Activated CD4-positive, alpha-beta T cell treated with anti-CD3 and anti-CD28 coated beads for 36 hours (primary cell): ENCODE measurements at regions of chr22 and their contacts with region 1.

Region 1: GRCh38 chr22:37300551-37301017 is 18.3 kb downstream of the CYTH4 start:
- DNase-seq: peak; percentile 63
- ATAC-seq: peak; percentile 31
- H3K4me3 Mint-ChIP-seq: peak overlapping the region; percentile 58
- H3K27ac Mint-ChIP-seq: peak overlapping the region; percentile 89
- H3K4me1 Mint-ChIP-seq: peaks cover 62% of the 10 kb centered on the region
- H3K27me3 Mint-ChIP-seq: no peaks in the 10 kb centered on the region

Region 2: DNA sequence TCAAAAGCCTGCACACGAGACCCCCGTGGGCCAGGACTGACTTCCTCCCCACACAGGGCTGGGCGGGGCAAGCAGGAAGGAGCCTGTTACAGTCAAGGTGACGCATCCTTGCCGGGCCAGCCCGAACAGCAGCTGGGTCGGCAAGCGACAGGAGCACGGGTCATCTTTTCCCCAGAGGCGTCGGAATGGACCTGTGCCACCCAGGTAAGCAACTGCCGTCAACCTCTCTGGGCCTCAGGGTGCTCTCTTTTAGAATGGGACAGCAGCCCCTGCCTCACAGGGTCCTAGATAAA is 18.3 kb before region 1 on chr22 and contains the start of gene CYTH4:
- CTCF ChIA-PET with region 1: interaction called, 4 read pairs
- POLR2A ChIA-PET with region 1: interaction called, 6 read pairs
- intact Hi-C with region 1: loop called in 1 of 2 experiments (anchors 1 kb)
- DNase-seq: peak; percentile 93
- ATAC-seq: peak; percentile 87
- H3K4me3 Mint-ChIP-seq: peak within 1 kb of the TSS; percentile 82
- H3K27ac Mint-ChIP-seq: peak within 1 kb of the TSS; percentile 98
- H3K4me1 Mint-ChIP-seq: peaks cover 60% of the 10 kb centered on the region
- H3K27me3 Mint-ChIP-seq: no peaks in the 10 kb centered on the region
- total RNA-seq, gene CYTH4: 33.1 to 42.8 TPM